Activated CD4-positive, alpha-beta T cell treated with anti-CD3 and anti-CD28 coated beads, Interleukin-2, amount 10 ng/mL, durations not matched to agents 24 days and 14 days (primary cell): ENCODE measurements at regions of chr2 and their contacts with region 1.

Region 1: GRCh38 chr2:135664623-135665068 is 77.0 kb upstream of the UBXN4 start:
- DNase-seq: no peak
- H3K4me3 Mint-ChIP-seq: no peak overlapping the region
- H3K27ac Mint-ChIP-seq: peak overlapping the region; percentile 79
- H3K4me1 Mint-ChIP-seq: peaks cover 31% of the 10 kb centered on the region
- H3K27me3 Mint-ChIP-seq: no peaks in the 10 kb centered on the region

Region 2: GRCh38 chr2:135607561-135607960 is 57.1 kb before region 1 on chr2:
- intact Hi-C with region 1: no loop called
- DNase-seq: no peak
- H3K4me3 Mint-ChIP-seq: no peak overlapping the region
- H3K27ac Mint-ChIP-seq: no peak overlapping the region
- H3K4me1 Mint-ChIP-seq: no peaks in the 10 kb centered on the region
- H3K27me3 Mint-ChIP-seq: no peaks in the 10 kb centered on the region

Region 3: GRCh38 chr2:135620198-135620597 is 44.4 kb before region 1 on chr2:
- intact Hi-C with region 1: loop called (anchors 1 kb)
- DNase-seq: no peak
- H3K4me3 Mint-ChIP-seq: no peak overlapping the region
- H3K27ac Mint-ChIP-seq: peak overlapping the region; percentile 38
- H3K4me1 Mint-ChIP-seq: peaks cover 5% of the 10 kb centered on the region
- H3K27me3 Mint-ChIP-seq: no peaks in the 10 kb centered on the region

Region 4: DNA sequence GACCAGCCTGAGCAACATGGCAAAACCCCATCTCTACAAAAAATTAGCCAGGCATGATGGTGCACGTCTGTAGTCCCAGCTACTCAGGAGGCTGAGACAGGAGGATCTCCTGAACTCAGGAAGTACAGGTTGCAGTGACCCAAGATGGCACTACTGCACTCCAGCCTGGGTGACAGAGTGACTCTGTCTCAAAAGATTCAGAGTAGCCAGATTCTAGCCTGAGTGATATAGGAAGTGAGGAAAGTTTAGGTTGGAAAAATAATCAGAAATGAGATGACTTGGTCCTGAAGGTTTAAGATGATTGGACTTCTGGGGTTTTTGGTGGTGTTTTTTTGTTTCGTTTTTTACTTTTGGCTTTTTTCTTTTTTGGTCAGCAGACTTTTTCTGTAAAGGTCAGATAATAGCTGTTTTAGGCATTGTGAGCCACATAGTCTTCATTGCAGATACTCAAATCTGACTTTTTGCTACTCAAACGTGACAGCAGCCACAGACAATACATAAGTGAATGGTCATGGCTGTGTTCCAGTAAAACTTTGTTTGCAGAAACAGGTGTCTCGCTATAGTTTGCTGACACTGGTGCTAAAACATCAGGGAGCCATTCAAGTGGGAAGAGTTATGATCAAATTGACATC is 27.1 kb before region 1 on chr2:
- intact Hi-C with region 1: loop called (anchors 2 kb)
- DNase-seq: no peak
- H3K4me3 Mint-ChIP-seq: no peak overlapping the region
- H3K27ac Mint-ChIP-seq: peak overlapping the region; percentile 58
- H3K4me1 Mint-ChIP-seq: peaks cover 8% of the 10 kb centered on the region
- H3K27me3 Mint-ChIP-seq: no peaks in the 10 kb centered on the region

Region 5: DNA sequence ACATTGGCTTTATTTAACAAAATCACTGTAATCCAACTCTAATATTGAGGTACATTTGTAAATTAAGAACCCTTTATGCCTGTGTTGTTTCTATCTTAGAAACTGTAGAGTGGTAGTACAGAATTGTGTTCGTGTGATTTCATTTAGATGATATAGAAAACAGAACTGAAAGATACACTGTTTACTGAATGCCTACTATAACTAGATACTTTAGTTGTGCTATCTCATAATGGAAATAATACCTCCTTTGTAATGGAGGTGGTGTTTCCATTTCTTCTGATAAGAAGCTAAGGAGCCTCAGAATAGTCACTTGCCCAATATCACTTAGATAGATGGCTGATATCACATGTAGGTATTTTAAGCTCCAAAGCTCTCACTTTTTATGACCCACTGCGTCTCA is 14.5 kb after region 1 on chr2:
- intact Hi-C with region 1: loop called (anchors 2 kb)
- DNase-seq: no peak
- H3K4me3 Mint-ChIP-seq: no peak overlapping the region
- H3K27ac Mint-ChIP-seq: no peak overlapping the region
- H3K4me1 Mint-ChIP-seq: peaks cover 2% of the 10 kb centered on the region
- H3K27me3 Mint-ChIP-seq: no peaks in the 10 kb centered on the region

Region 6: DNA sequence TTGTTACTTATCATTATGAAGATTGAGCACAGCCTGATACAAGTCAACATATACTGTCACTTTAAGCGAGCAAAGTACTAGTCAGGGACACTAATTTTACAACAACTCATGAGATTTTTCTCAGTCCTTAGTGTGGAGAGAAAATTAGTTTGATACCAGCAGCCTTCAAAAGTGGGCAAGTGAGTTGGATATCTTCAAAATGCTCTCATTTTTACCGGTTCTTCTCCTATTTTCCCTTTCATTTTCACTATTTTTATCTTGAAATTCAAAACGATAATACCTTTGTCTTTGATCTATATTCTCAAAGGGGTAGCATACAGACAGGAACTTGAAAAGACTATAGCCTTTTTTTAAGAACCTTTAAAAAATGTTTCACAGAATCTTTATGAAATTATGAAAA is 25.0 kb after region 1 on chr2:
- intact Hi-C with region 1: loop called (anchors 1 kb)
- DNase-seq: peak; percentile 54
- H3K4me3 Mint-ChIP-seq: peak overlapping the region; percentile 72
- H3K27ac Mint-ChIP-seq: peak overlapping the region; percentile 90
- H3K4me1 Mint-ChIP-seq: peaks cover 23% of the 10 kb centered on the region
- H3K27me3 Mint-ChIP-seq: no peaks in the 10 kb centered on the region

Region 7: DNA sequence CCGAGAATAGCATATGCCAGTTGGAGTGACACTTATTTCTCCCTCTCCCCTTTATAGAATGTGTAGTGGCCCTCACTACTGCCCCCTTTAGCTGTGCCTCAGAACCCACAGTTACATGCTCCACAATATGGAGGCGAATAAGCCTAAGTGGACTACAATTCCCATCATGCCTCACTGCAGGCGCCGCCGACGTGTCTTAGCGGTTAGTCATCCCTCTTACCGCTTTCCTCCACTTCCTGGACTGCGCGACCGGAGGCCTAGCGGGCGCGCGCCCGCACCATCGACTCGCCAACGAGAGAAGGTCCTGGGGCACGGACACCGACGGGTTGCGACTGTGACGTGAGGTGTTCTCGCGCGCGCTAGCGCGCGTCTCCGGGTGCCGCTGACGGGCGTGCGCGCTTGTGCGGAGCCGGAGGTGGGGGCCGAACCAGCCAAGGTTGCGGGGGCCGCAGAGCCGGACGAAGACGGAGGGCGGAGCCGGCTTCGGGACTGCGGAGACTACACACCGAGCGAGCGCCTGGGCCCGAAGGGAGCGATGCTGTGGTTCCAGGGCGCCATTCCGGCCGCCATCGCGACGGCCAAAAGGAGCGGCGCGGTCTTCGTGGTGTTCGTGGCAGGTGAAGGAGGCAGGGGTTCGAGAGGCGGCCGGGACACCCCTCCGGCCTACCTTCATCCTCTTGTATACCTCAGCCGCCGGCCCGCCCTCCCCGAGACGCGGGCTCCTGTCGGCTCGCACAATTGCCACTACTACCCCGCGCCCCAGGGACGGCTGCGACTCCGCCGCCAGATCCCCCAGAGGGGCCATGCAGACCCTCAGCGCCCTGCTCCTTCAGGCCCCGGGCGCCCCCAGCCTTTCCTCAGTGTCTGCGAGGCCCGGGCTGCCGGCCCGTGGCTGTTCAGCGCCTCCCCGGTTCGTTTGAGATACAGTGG is 77.0 kb after region 1 on chr2 and contains the start of gene UBXN4:
- intact Hi-C with region 1: loop called (anchors 5 kb)
- DNase-seq: peak; percentile 96
- H3K4me3 Mint-ChIP-seq: peak within 1 kb of the TSS; percentile 99
- H3K27ac Mint-ChIP-seq: peak within 1 kb of the TSS; percentile 100
- H3K4me1 Mint-ChIP-seq: peaks cover 36% of the 10 kb centered on the region
- H3K27me3 Mint-ChIP-seq: no peaks in the 10 kb centered on the region
- total RNA-seq, gene UBXN4: 116 and 127 TPM in 2 replicates

Region 8: GRCh38 chr2:135820003-135820618 is 155.5 kb after region 1 on chr2:
- intact Hi-C with region 1: loop called (anchors 10 kb)
- DNase-seq: peak; percentile 93
- H3K4me3 Mint-ChIP-seq: peak overlapping the region; percentile 74
- H3K27ac Mint-ChIP-seq: peak overlapping the region; percentile 83
- H3K4me1 Mint-ChIP-seq: peaks cover 44% of the 10 kb centered on the region
- H3K27me3 Mint-ChIP-seq: no peaks in the 10 kb centered on the region

Region 9: GRCh38 chr2:136185981-136186776 is 521.5 kb after region 1 on chr2:
- intact Hi-C with region 1: no loop called
- DNase-seq: no peak
- H3K4me3 Mint-ChIP-seq: no peak overlapping the region
- H3K27ac Mint-ChIP-seq: no peak overlapping the region
- H3K4me1 Mint-ChIP-seq: peaks cover 2% of the 10 kb centered on the region
- H3K27me3 Mint-ChIP-seq: peaks cover 17% of the 10 kb centered on the region